ENCODE measurements at regions of chr11 and their contacts with region 1.

Region 1: DNA sequence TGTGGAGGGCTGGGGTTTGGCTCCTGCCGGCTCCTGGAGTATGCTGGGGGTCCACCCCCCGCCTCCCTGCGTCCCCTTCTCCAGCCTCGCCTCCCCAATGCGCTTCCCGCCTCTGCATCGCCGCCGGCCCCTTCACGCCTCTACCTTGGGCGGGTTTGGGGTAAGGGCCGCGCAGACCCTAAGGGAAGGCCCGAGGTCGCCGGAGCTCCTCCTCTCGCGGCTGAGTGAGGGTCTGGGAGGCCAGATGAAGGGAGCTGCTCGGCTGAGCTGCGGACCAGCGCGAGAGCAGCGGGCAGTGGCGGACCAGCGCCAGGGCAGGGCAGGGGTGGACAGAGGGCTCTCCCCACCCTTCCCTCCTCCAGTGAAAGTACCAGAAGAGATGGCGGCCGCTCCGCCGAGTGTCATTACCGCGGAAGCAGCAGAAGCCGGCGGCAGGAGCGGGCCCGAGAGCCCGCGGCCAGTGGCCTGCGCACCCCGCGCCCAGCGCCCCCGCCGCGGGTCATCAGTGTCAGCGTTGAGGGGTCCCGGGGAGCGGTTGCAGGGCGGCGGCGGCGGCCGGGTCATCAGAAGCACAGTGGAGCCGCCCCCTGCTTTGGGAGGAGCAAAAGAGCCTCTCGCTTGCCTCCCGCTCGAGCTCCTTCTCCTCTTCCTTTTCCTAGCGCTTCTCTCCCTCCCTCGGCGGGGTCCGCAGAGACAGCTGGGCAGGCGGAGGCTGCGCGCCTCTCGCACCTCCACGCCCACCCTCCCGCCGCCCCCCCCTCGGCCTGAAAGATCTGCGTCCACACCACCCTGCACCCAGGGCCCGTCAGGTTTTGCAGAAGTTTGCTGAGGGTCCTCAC is 255.6 kb upstream of the CADM1 start:
- DNase-seq: no peak
- ATAC-seq: peak; percentile 82
- H3K4me3 ChIP-seq: peak overlapping the region; percentile 53
- H3K27ac ChIP-seq: peak overlapping the region; percentile 25
- H3K4me1 ChIP-seq: peaks cover 8% of the 10 kb centered on the region
- H3K27me3 ChIP-seq: no peaks in the 10 kb centered on the region
- CTCF ChIP-seq: no peak
- POLR2A ChIP-seq: no peak
- RAD21 ChIP-seq: no peak

Region 2: DNA sequence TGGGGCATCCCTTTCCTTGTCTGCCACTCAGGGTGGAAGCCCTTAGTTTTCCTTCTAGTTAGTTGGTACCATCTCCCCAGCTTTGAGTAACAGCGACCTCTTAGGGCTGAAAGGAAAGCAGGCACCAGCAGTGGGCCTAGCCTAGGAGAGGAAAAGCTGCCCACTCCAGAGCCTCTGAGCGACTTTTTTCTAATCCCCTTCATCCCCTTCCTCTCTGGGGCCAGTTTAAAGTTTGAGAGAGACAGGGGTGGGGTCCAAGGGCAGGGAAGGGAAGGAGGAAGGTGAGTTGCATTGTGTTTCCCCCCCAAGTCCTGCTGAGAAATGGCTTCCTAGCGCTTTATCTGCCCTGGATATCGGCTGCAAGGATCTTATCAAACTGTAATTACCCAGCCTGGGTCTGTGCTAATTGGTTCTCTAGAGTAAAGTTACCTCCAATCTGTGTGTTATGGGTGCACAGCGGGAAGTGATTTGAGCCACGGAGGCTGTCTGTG is 318.3 kb after region 1 on chr11:
- CTCF ChIA-PET with region 1: no interaction called
- POLR2A ChIA-PET with region 1: no interaction called
- dilution Hi-C with region 1: no loop called
- in situ Hi-C with region 1: no loop called
- intact Hi-C with region 1: loop called (anchors 2 kb)
- DNase-seq: peak; percentile 20
- ATAC-seq: peak; percentile 49; the same call in 1 of the 2 replicates
- H3K4me3 ChIP-seq: no peak overlapping the region
- H3K27ac ChIP-seq: no peak overlapping the region
- H3K4me1 ChIP-seq: no peaks in the 10 kb centered on the region
- H3K27me3 ChIP-seq: no peaks in the 10 kb centered on the region; the same call in 1 of the 2 replicates
- CTCF ChIP-seq: peak; percentile 52
- POLR2A ChIP-seq: no peak
- RAD21 ChIP-seq: peak; percentile 63